Esophagus muscularis mucosa (tissue), 4 donors: ENCODE measurements at regions of chr5 and their contacts with region 1.

Region 1: GRCh38 chr5:79133657-79134451 is 22.2 kb downstream of the BHMT start:
- DNase-seq: peak; percentile 94
- H3K4me3 ChIP-seq: peak overlapping the region; percentile 41 to 51 (median 44)
- H3K27ac ChIP-seq: peak overlapping the region; percentile 79 to 87 (median 82)
- H3K4me1 ChIP-seq: peaks cover 5 to 21% (median 16%) of the 10 kb centered on the region in 4 donors
- H3K27me3 ChIP-seq: no peaks in the 10 kb centered on the region
- CTCF ChIP-seq: peak; percentile 69 to 83 (median 78)
- EP300 ChIP-seq: no peak
- POLR2A ChIP-seq: no peak

Region 2: DNA sequence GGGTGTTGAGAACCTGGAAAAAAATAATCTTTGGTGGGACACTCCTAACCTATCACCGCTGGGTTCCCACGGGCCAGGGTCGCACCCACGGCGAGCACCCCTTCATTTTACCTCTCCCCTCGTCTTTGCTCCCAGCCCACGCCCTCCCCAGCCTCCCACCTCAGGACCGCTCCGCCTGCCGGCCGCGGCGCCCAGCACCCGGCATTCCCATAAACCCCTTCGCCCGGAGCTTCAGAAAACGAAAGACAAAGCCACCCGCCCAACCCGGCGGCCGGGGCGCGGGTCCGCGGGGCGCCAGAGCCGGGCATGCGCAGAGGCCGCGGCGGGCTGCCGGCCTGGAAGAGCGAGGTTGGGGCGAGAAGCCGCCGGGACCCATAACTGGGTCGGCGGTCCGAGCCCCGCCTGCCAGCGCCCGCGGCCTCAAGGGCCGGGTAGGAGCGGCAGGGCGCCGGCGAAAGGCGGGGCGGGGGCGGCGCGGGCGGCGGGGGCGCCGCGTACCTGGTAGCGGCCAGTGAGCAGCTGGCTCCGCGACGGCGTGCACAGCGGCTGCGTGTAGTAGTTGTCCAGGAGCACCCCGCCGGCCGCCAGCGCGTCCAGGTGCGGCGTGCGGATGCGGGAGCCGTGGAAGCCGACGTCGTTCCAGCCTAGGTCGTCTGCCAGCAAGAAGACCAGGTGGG is 149.3 kb before region 1 on chr5:
- intact Hi-C with region 1: loop called (anchors 5 kb)
- DNase-seq: peak; percentile 96
- H3K4me3 ChIP-seq: peak overlapping the region; percentile 79 to 88 (median 86)
- H3K27ac ChIP-seq: peak overlapping the region; percentile 96 to 99 (median 98)
- H3K4me1 ChIP-seq: peaks cover 15 to 55% (median 47%) of the 10 kb centered on the region in 4 donors
- H3K27me3 ChIP-seq: no peaks in the 10 kb centered on the region
- CTCF ChIP-seq: peak; percentile 25 to 56 (median 41)
- EP300 ChIP-seq: no peak
- POLR2A ChIP-seq: no peak

Region 3: GRCh38 chr5:79464695-79465332 is 331.0 kb after region 1 on chr5:
- intact Hi-C with region 1: loop called (anchors 5 kb)
- DNase-seq: no peak
- H3K4me3 ChIP-seq: no peak overlapping the region
- H3K27ac ChIP-seq: no peak overlapping the region
- H3K4me1 ChIP-seq: peaks cover 0 to 9% (median 6%) of the 10 kb centered on the region in 4 donors
- H3K27me3 ChIP-seq: no peaks in the 10 kb centered on the region
- CTCF ChIP-seq: peak; percentile 63 to 71 (median 64)
- EP300 ChIP-seq: no peak
- POLR2A ChIP-seq: no peak